ENCODE measurements at regions of chr21 and their contacts with region 1.

Region 1: GRCh38 chr21:34603002-34603709 is 11.8 kb downstream of the RCAN1 start:
- DNase-seq: peak; percentile 84
- H3K4me3 ChIP-seq: no peak overlapping the region
- H3K27ac ChIP-seq: no peak overlapping the region
- H3K4me1 ChIP-seq: peaks cover 0 to 15% (median 0%) of the 10 kb centered on the region in 4 donors
- H3K27me3 ChIP-seq: no peaks in the 10 kb centered on the region
- CTCF ChIP-seq: peak; percentile 73 to 77 (median 76)
- EP300 ChIP-seq: no peak
- POLR2A ChIP-seq: no peak

Region 2: DNA sequence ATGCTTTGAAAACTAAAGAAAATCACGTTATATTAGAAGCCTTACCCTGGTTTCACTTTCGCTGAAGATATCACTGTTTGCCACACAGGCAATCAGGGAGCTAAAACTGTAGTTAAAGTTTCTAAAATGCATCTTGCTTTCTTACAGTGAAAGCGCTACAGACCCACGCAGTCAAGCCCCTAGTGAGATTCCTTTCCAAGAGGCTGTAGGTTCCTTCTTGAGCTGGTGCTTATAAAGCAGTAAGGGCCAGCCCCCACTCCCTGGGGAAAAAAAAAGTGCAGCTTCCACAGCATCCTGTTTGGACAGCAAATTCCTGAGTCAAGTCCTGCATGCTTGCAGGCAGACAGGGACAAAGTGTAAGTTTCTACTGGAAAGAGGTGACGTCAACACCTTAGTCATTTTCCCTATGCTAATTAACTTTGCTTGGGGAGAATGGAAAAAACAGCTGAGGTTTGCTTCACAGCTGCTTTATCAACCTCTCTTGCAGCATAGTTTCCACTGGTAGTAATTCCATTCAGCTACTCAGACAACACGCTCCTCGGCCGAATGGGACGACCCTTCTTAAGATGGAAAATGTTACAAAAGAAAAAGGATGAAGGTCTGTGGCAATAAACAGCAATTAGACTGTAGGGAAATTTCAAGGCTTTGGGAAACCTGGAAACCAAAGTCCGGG is 76.4 kb before region 1 on chr21:
- in situ Hi-C with region 1: no loop called
- intact Hi-C with region 1: loop called (anchors 5 kb)
- DNase-seq: peak; percentile 76
- H3K4me3 ChIP-seq: peak overlapping the region; percentile 15 to 55 (median 30)
- H3K27ac ChIP-seq: peak overlapping the region; percentile 89 to 97 (median 94)
- H3K4me1 ChIP-seq: peaks cover 20 to 63% (median 50%) of the 10 kb centered on the region in 4 donors
- H3K27me3 ChIP-seq: no peaks in the 10 kb centered on the region
- CTCF ChIP-seq: no peak
- EP300 ChIP-seq: peak; percentile 77
- POLR2A ChIP-seq: peak; percentile 88

Region 3: GRCh38 chr21:34582506-34583150 is 20.5 kb before region 1 on chr21:
- in situ Hi-C with region 1: no loop called
- intact Hi-C with region 1: loop called (anchors 1 kb)
- DNase-seq: no peak
- H3K4me3 ChIP-seq: no peak overlapping the region
- H3K27ac ChIP-seq: peak overlapping the region in 2 of 4 donors; percentile 27 to 36
- H3K4me1 ChIP-seq: peaks cover 0 to 34% (median 10%) of the 10 kb centered on the region in 4 donors
- H3K27me3 ChIP-seq: no peaks in the 10 kb centered on the region
- CTCF ChIP-seq: peak; percentile 30 to 66 (median 37)
- EP300 ChIP-seq: no peak
- POLR2A ChIP-seq: no peak

Region 4: GRCh38 chr21:34715518-34715917 is 112.4 kb after region 1 on chr21:
- in situ Hi-C with region 1: no loop called
- intact Hi-C with region 1: no loop called
- DNase-seq: no peak
- H3K4me3 ChIP-seq: no peak overlapping the region
- H3K27ac ChIP-seq: no peak overlapping the region
- H3K4me1 ChIP-seq: no peaks in the 10 kb centered on the region
- H3K27me3 ChIP-seq: no peaks in the 10 kb centered on the region
- CTCF ChIP-seq: no peak
- EP300 ChIP-seq: no peak
- POLR2A ChIP-seq: no peak

Region 5: DNA sequence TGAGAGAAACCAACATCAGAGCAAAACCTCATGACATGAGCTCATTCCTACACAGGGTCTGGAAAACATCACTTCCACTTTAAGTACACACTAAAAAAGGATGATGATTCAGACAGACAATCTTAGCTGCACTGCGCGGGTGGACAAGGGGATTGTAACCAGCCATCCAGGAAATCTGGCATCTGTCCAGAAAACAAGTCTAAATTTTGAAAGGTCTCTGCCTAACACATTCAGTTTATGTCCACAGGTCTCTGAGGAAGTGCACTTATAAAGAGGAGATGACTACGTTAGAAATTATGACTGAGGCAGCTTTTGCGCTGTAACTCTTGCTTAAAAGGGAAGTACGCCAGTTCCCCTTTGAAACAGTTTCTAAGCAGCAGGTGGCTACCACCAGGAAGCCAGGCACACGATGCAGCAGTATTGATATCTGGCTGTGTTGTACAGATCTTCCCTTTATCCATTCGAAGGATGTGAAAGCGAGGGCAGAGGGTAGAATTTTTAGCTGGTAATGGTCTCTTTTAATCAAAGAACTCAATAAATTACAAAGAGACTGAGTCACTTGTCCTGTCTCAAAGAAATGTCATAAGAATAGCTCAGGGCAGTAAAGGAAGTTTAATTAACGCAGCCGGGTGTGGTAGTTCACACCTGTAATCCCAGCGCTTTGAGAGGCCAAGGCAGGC is 1329.2 kb after region 1 on chr21:
- in situ Hi-C with region 1: no loop called
- intact Hi-C with region 1: no loop called
- DNase-seq: peak; percentile 37
- H3K4me3 ChIP-seq: no peak overlapping the region
- H3K27ac ChIP-seq: peak overlapping the region; percentile 20 to 71 (median 60)
- H3K4me1 ChIP-seq: peaks cover 0 to 21% (median 7%) of the 10 kb centered on the region in 4 donors
- H3K27me3 ChIP-seq: no peaks in the 10 kb centered on the region
- CTCF ChIP-seq: no peak
- EP300 ChIP-seq: no peak
- POLR2A ChIP-seq: no peak